ENCODE measurements at regions of chr15 and their contacts with region 1.

Region 1: GRCh38 chr15:98745650-98746622 is 97.6 kb downstream of the IGF1R start:
- DNase-seq: peak; percentile 57
- ATAC-seq: peak; percentile 86
- H3K4me3 ChIP-seq: no peak overlapping the region
- H3K27ac ChIP-seq: no peak overlapping the region
- H3K4me1 ChIP-seq: peaks cover 17% of the 10 kb centered on the region
- H3K27me3 ChIP-seq: no peaks in the 10 kb centered on the region
- CTCF ChIP-seq: no peak
- POLR2A ChIP-seq: no peak
- RAD21 ChIP-seq: no peak

Region 2: DNA sequence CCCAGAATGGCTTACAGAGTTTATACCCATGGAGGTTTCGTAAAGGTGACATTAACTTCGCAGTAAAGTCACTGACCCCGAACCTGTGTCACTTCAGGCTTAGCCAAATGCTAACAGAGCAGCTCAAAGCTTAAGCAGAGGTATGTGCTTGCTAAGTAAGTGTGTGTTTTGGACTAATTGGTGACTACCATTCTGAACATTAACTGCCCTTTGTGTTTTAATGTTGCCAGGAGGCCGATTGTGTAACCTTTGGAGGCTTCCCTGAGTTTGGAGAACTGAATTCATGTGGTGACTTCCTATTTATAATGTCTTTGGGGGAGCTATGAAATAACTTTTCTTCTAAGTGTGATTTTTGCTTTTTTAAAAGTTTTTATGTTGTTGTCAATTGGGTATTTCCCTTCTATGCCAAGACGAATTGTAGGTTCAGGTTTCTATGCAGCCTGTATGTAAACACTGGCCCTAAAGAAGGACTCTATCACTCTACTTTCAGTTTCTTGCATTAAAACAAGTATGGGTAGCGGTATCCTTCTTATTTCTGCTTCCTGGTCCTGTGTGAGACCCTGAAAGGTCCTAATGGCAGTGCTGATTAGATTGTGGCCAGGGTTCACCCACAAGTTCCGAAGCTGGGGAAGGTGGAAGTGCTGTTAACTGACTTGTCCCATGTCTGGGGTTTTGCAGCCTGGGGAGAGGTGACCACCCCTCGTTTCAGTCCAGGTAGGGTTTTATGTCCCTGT is 11.3 kb before region 1 on chr15:
- CTCF ChIA-PET with region 1: interaction called, 3 read pairs
- POLR2A ChIA-PET with region 1: no interaction called
- dilution Hi-C with region 1: no loop called
- in situ Hi-C with region 1: no loop called
- intact Hi-C with region 1: loop called (anchors 1 kb)
- DNase-seq: peak; percentile 48
- ATAC-seq: peak; percentile 40; the same call in 1 of the 2 replicates
- H3K4me3 ChIP-seq: no peak overlapping the region
- H3K27ac ChIP-seq: no peak overlapping the region
- H3K4me1 ChIP-seq: peaks cover 26% of the 10 kb centered on the region
- H3K27me3 ChIP-seq: no peaks in the 10 kb centered on the region
- CTCF ChIP-seq: no peak
- POLR2A ChIP-seq: no peak
- RAD21 ChIP-seq: no peak